ENCODE measurements at regions of chr10 and their contacts with region 1.

Region 1: DNA sequence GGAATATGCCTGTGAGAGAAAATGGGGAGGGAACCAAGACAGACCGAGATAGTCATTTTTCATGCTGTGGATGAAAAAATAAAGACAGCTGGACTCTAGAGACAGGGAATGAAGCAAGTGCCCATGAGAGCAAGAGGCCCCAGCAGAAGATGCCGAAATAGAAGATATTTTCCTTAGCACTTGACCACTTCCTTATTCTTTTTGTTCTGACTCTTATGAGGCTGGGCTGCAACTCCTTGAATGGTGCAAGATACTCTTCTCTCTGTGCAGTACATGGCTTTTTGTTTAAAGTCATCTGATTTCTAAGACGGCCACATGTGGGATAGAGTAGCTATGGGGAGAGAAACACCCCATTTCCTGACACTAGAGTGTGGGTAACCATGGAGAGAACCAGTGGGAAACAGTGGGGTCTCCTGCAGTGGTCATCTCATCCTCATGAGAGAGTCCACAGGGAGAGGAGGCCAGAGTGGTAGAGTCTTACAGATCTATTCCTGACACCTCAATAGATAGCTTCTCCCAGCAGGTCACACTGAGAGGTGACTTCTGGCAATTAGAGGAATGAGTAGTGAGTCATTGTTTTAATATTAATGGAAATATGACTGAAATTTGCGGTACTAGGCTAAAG is 18.0 kb upstream of the VCL start:
- DNase-seq: no peak
- H3K4me3 ChIP-seq: no peak overlapping the region
- H3K27ac ChIP-seq: peak overlapping the region in 1 of 2 donors; percentile 33
- H3K4me1 ChIP-seq: no peaks in the 10 kb centered on the region
- H3K27me3 ChIP-seq: no peaks in the 10 kb centered on the region
- CTCF ChIP-seq: no peak
- POLR2A ChIP-seq: no peak

Region 2: DNA sequence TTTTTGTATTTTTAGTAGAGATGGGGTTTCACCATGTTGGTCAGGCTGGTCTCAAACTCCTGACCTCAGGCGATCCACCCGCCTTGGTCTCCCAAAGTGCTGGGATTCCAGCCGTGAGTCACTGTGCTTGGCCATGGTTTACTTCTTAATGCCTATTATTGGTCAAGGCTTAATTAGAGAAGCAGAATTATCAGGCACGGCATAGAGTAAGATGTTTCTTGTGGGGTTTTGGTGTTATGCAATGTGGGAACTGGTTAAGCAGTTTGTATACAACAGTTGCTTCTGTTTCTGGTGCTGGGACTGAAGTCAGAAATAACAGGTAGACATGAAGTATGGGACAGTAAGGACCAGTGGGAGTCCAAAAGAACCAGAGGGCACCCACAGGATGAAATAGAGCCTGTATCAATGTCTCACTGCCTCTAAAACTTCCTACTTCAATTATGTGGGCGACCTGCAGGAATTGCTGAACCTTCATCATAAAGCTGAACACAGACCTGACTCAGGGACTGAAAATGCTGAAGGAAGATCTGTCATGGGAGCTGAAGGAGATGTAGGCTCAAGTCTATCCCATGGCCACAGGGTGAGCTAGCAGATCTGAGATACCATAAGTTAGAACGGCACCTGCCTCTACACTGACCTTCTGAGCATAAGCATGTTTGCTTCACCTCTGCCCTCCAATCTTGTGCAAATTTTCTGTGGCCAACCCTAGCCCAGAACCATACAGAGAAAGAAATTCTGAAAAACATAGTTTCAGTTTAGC is 20.3 kb before region 1 on chr10:
- intact Hi-C with region 1: loop called (anchors 2 kb)
- DNase-seq: no peak
- H3K4me3 ChIP-seq: no peak overlapping the region
- H3K27ac ChIP-seq: peak overlapping the region in 1 of 2 donors; percentile 83
- H3K4me1 ChIP-seq: peaks cover 0 to 12% of the 10 kb centered on the region in 2 donors
- H3K27me3 ChIP-seq: no peaks in the 10 kb centered on the region
- CTCF ChIP-seq: no peak
- POLR2A ChIP-seq: no peak

Measured in breast epithelium (tissue), 4 donors.